Endothelial cell of umbilical vein (primary cell): ENCODE measurements at regions of chr20 and their contacts with region 1.

Region 1: GRCh38 chr20:49219089-49219923 is at the start of gene DDX27:
- DNase-seq: peak; percentile 99
- H3K4me3 ChIP-seq: peak within 1 kb of the TSS; percentile 62 to 86 (median 85)
- H3K27ac ChIP-seq: peak within 1 kb of the TSS; percentile 70
- H3K4me1 ChIP-seq: peaks cover 6% of the 10 kb centered on the region
- H3K27me3 ChIP-seq: no peaks in the 10 kb centered on the region
- CTCF ChIP-seq: no peak
- POLR2A ChIP-seq: peak; percentile 87
- total RNA-seq, gene DDX27: 25.7 and 26.1 TPM in 2 replicates

Region 2: DNA sequence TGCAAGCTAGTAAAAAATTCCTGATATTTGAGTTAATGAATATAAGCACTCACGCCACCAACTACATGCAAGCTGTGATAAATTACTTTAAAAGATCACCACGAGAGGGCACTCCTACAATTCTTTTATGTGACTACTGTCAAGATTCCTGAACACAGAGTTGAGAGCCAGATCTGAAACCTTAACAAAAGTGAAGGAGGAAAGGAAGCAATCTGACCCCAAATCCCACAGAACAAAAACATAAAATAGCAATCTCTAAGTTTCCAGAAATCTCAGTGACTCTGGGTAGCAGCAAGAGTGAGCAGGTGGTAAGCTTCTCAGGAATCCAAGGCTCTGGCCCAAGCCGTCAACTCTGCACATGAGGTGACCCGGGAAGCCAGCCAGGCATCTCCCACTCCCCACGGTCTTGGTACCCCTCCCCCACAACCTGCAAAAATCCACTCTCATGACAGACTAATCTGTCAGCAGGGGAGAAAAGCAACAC is 86.3 kb before region 1 on chr20:
- CTCF ChIA-PET with region 1: interaction called, 170 read pairs
- POLR2A ChIA-PET with region 1: interaction called, 4 read pairs
- dilution Hi-C with region 1: loop called (anchors 10 kb)
- intact Hi-C with region 1: loop called (anchors 1 kb)
- DNase-seq: peak; percentile 76
- H3K4me3 ChIP-seq: no peak overlapping the region
- H3K27ac ChIP-seq: no peak overlapping the region
- H3K4me1 ChIP-seq: no peaks in the 10 kb centered on the region
- H3K27me3 ChIP-seq: no peaks in the 10 kb centered on the region
- CTCF ChIP-seq: peak; percentile 29 to 32
- POLR2A ChIP-seq: no peak

Region 3: DNA sequence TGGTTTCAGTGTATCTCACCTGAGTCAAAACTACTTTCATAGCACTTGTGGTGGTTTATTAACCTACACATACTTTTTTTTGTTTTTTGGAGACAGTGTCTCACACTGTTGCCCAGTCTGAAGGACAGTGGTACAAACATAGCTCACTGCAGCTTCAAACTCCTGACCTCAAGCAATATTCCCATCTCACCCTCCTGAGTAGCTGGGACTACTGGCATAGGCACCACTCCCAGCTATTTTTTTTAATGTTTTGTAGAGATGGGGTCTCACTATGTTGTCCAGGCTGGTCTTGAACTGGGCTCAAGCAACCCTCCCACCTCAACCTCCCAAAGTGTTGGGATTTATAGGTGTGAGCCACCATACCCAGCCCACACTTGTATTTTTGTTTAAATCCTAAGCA is 80.9 kb before region 1 on chr20:
- CTCF ChIA-PET with region 1: interaction called, 170 read pairs
- POLR2A ChIA-PET with region 1: interaction called, 4 read pairs
- dilution Hi-C with region 1: loop called (anchors 10 kb)
- intact Hi-C with region 1: loop called (anchors 1 kb)
- DNase-seq: no peak
- H3K4me3 ChIP-seq: no peak overlapping the region
- H3K27ac ChIP-seq: no peak overlapping the region
- H3K4me1 ChIP-seq: no peaks in the 10 kb centered on the region
- H3K27me3 ChIP-seq: no peaks in the 10 kb centered on the region
- CTCF ChIP-seq: no peak
- POLR2A ChIP-seq: no peak

Region 4: DNA sequence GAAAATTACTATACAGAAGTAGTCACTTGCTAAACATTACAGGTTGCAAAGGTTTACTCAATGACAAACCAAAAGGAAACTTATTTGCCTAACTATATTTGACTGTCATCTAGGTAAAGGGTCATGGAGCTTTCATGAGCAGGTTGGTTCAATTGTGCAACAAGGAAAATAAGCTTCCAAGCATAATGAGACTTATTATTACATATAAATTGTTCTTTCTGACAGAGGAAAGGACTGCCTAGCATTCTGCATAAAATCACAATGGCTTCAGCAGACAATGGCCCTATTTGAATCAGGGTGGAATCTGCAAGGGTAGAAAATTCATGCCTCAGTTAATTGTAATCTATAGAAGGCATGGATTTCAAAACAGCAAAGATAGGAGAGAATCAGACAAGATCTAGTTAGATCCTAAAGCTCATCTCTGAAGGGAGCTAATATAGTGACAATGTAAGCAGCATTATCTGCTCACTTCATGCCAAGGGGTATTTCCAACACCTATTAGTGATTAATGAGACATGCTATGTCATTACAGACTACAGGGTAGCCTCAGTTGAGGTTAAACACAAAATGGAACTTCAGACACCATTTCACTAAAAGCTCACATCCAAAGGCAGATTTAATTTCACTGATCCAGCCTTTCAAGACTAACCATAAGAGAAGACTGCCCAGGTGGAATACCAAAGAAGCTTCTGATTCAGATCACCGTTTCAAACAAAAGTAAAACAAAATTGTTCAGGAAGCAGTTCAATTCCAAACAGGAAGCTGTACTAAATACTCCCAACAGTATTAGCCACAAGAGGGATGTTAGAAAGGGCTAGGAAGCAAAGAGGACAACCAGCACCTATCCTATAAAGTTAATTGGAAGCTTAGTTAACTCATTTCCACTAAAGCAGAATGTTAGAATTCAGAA is 39.7 kb before region 1 on chr20:
- CTCF ChIA-PET with region 1: interaction called, 23 read pairs
- POLR2A ChIA-PET with region 1: interaction called, 3 read pairs
- dilution Hi-C with region 1: no loop called
- intact Hi-C with region 1: no loop called
- DNase-seq: peak; percentile 28
- H3K4me3 ChIP-seq: no peak overlapping the region
- H3K27ac ChIP-seq: no peak overlapping the region
- H3K4me1 ChIP-seq: peaks cover 10% of the 10 kb centered on the region
- H3K27me3 ChIP-seq: no peaks in the 10 kb centered on the region
- CTCF ChIP-seq: no peak
- POLR2A ChIP-seq: no peak

Region 5: DNA sequence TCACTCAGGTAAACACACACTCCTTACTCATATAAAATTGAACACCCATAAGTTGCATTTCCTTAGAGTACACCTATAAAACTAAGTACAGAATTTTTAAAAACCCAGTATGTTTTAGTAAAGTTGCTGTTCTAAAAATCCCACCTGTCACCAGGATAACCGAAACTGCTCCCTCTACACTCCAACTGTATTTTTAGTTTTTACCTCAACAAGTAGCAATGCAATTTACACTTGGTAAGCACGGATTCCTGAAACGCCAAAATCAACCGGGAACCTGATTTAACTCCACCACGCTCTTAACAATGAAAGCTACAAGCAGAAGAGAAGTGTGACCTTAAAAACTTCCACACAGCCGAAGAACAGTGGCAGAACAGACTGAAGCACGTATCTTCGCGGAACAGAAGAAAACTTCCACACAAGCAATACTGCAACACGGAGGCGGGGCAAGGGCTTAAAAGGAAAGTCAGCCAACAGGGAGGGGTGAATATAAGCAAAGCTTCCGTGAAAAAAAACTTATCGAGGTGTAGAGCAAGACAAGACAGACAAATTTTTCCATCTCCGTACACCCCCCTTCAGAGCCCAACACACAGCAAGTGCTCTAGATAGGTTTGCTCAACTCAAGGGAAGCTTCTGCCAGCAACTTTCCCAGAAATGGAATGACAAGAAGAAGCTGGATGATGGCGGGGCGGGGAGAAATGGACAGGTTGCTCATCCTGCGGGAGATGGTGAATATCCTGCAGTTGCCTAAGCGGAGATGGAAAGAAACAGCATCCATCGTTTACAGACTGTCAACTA is 32.6 kb before region 1 on chr20:
- CTCF ChIA-PET with region 1: interaction called, 23 read pairs
- POLR2A ChIA-PET with region 1: interaction called, 3 read pairs
- dilution Hi-C with region 1: no loop called
- intact Hi-C with region 1: loop called (anchors 1 kb)
- DNase-seq: peak; percentile 71
- H3K4me3 ChIP-seq: peak overlapping the region; percentile 83 to 94 (median 90)
- H3K27ac ChIP-seq: no peak overlapping the region
- H3K4me1 ChIP-seq: peaks cover 7% of the 10 kb centered on the region
- H3K27me3 ChIP-seq: peaks cover 0 to 4% of the 10 kb centered on the region in 2 experiments
- CTCF ChIP-seq: no peak
- POLR2A ChIP-seq: peak; percentile 25

Region 6: DNA sequence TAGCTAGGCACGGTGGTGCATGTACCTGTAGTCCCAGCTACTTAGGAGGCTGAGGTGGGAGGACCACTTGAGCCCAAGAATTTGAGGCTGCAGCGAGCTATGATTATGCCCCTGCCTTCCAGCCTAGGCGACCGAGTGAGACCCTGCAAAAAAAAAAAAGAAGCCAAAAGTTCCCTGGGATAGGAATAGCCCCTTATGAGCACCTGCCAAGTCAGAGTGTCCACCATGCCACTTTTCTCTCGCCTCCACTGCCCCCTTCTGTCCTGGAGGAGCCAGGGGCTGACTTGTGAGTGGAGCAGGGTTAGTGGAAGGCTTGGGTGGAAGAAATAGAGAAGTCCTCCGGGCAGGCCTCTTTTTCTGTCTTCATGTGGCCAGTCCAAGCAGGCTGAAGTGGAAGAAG is 12.2 kb before region 1 on chr20:
- CTCF ChIA-PET with region 1: interaction called, 28 read pairs
- POLR2A ChIA-PET with region 1: no interaction called
- dilution Hi-C with region 1: no loop called
- intact Hi-C with region 1: no loop called
- DNase-seq: no peak
- H3K4me3 ChIP-seq: no peak overlapping the region
- H3K27ac ChIP-seq: no peak overlapping the region
- H3K4me1 ChIP-seq: no peaks in the 10 kb centered on the region
- H3K27me3 ChIP-seq: no peaks in the 10 kb centered on the region
- CTCF ChIP-seq: no peak
- POLR2A ChIP-seq: no peak

Region 7: GRCh38 chr20:49237531-49237930 is 18.2 kb after region 1 on chr20:
- CTCF ChIA-PET with region 1: interaction called, 11 read pairs
- POLR2A ChIA-PET with region 1: interaction called, 7 read pairs
- dilution Hi-C with region 1: no loop called
- intact Hi-C with region 1: no loop called
- DNase-seq: no peak
- H3K4me3 ChIP-seq: no peak overlapping the region
- H3K27ac ChIP-seq: no peak overlapping the region
- H3K4me1 ChIP-seq: no peaks in the 10 kb centered on the region
- H3K27me3 ChIP-seq: no peaks in the 10 kb centered on the region
- CTCF ChIP-seq: no peak
- POLR2A ChIP-seq: no peak